ENCODE measurements at regions of chr6 and their contacts with region 1.

Region 1: DNA sequence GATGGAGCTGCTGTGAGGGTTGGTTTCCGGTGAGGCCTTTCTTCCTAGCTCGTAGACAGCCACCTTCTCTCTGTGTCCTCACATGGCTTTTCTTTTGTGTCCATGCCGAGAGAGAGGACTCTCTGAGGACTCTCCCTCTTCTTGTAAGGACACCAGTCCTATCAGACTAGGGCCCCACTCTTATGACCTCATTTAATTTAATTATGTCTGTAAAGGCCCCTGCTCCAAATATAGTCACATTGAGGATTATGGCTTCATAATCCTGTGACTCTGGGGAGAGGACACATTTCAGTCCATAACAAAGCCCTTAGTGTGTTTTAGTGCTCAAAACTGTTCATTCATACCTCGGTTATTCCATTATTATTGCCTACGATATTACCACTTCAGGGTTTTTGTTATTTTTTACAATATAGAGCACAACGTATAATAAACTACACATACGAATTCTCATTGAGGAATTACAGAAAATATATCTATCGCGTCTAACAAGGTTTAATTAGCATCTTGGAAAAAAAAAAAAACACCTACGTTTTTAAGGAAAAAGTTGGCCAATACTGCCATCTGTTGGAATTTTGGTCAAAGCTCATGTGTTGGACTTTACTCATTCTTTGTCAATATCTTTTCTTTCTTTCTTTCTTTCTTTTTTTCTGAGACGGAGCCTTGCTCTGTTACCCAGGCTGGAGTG is 20.0 kb upstream of the TFAP2A start:
- DNase-seq: peak; percentile 65
- H3K4me3 Mint-ChIP-seq: no peak overlapping the region
- H3K27ac Mint-ChIP-seq: no peak overlapping the region
- H3K4me1 Mint-ChIP-seq: peaks cover 12% of the 10 kb centered on the region
- H3K27me3 Mint-ChIP-seq: peaks cover 2% of the 10 kb centered on the region

Region 2: DNA sequence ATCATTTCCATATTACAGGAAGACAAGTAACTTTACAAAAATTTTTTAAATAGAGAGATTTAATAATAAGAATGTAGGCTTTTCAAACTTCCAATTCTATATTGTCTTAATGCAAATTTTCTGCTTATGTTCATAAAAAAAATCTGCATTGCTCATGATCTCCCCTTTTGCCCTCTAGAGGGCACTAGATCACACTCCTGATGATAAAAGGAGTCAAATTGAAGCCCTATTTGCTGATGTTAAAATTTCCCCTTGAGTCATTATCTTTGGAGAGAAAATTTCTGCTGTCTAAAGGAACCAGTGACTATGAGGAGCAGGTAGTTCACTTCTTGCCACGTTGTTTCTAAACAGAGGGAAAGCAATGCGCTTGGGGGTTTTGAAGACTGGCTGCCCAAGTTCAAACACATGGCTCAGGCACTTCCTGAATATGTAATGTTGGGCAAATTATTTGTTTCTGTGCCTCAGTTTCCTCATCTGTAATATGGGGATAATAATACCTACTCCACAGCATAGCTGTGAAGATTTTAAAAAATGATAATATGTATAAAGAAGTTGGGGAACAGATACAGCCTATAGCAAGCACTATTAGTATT is 894.2 kb before region 1 on chr6:
- intact Hi-C with region 1: loop called (anchors 1 kb)
- DNase-seq: peak; percentile 64
- H3K4me3 Mint-ChIP-seq: no peak overlapping the region
- H3K27ac Mint-ChIP-seq: no peak overlapping the region
- H3K4me1 Mint-ChIP-seq: no peaks in the 10 kb centered on the region
- H3K27me3 Mint-ChIP-seq: no peaks in the 10 kb centered on the region

Region 3: GRCh38 chr6:10411971-10412745 is 22.7 kb before region 1 on chr6:
- intact Hi-C with region 1: no loop called
- DNase-seq: peak; percentile 86
- H3K4me3 Mint-ChIP-seq: peak overlapping the region; percentile 92
- H3K27ac Mint-ChIP-seq: peak overlapping the region; percentile 76
- H3K4me1 Mint-ChIP-seq: peaks cover 31% of the 10 kb centered on the region
- H3K27me3 Mint-ChIP-seq: peaks cover 89% of the 10 kb centered on the region

Region 4: DNA sequence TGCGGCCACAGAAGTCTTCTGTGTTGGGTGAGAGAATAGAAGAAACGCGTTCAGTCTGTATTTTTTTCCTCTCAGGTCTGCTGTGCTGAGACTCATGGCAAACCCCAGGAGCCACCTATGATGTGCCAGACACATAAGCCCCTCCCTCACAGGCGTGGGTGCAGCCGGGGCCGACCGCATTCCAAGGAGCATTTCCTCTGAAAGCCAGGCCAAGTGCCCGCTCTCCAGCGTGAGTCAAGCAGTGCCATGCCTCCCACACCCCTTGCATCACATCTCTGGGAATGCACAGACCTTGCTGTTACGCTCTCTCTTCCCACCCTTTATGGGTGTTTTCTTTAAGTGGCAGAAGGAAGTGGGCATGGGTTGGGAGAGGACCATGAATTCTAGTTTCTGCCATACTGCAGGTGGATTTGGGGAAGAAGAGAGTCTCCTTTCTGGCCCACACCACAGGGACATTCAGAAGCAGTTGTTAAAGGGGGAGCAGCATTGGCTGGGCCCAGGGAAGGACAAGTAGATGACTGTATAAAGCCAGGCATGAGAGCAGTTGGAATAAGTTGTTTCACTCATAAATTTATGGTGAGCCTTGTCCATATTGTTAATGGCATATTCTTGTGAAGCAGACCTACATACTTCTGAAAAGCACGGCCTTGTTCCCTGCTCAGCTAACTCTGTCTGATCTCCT is 17.1 kb after region 1 on chr6:
- intact Hi-C with region 1: no loop called
- DNase-seq: no peak
- H3K4me3 Mint-ChIP-seq: no peak overlapping the region
- H3K27ac Mint-ChIP-seq: no peak overlapping the region
- H3K4me1 Mint-ChIP-seq: no peaks in the 10 kb centered on the region
- H3K27me3 Mint-ChIP-seq: no peaks in the 10 kb centered on the region

Measured in activated CD4-positive, alpha-beta T cell treated with anti-CD3 and anti-CD28 coated beads, Interleukin-2, amount 10 ng/mL, durations not matched to agents 24 days and 14 days (primary cell).